ENCODE measurements at regions of chr20 and their contacts with region 1.

Region 1: GRCh38 chr20:35601008-35601973 is 14.3 kb upstream of the SPAG4 start:
- DNase-seq: peak; percentile 89
- H3K4me3 Mint-ChIP-seq: peak overlapping the region; percentile 67
- H3K27ac Mint-ChIP-seq: no peak overlapping the region
- H3K4me1 Mint-ChIP-seq: peaks cover 9% of the 10 kb centered on the region
- H3K27me3 Mint-ChIP-seq: peaks cover 18% of the 10 kb centered on the region

Region 2: GRCh38 chr20:35583636-35584560 is 17.4 kb before region 1 on chr20:
- CTCF ChIA-PET with region 1: no interaction called
- POLR2A ChIA-PET with region 1: no interaction called
- intact Hi-C with region 1: no loop called
- DNase-seq: no peak
- H3K4me3 Mint-ChIP-seq: no peak overlapping the region
- H3K27ac Mint-ChIP-seq: no peak overlapping the region
- H3K4me1 Mint-ChIP-seq: no peaks in the 10 kb centered on the region
- H3K27me3 Mint-ChIP-seq: no peaks in the 10 kb centered on the region

Region 3: DNA sequence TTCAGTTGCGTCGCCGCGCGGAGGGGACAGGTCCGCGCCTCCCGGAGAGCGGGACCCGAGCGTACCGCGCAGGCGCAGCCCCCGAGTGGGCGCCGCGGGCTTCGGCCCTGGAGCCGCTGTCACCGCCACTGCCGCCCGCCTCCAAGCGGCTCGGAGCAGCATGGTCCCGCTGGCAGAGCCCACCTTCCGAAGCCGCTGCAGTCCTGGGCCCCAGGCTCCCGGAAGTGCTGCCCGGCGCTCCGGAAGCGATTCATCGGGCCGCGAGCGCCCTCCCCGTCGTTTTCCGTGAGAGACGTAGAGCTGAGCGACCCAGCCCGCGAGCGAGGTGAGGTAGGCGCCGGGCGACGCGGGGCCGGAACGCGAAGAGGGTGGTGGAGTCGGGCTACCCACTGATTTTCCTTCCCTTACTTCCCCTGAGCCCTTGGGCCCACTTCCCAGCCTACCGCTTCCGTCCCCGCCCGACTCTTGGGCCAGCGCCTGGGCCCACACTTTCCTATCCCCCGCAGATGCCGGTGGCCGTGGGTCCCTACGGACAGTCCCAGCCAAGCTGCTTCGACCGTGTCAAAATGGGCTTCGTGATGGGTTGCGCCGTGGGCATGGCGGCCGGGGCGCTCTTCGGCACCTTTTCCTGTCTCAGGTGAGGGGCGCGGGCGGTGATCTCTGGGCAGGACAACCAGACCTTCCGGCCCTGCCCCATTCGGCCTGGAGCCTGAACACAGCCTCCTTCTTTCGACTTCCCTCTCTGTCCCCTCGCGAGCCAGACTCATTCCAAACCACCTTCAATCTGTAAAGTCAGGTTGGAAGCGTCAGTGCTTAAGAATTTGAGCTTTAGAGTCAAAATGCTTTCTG is 98.1 kb after region 1 on chr20 and contains the starts of genes NFS1 and ROMO1:
- CTCF ChIA-PET with region 1: interaction called, 8 read pairs
- POLR2A ChIA-PET with region 1: interaction called, 3 read pairs
- intact Hi-C with region 1: loop called (anchors 1 kb)
- DNase-seq: peak; percentile 91
- H3K4me3 Mint-ChIP-seq: peak within 1 kb of the TSS; percentile 88
- H3K27ac Mint-ChIP-seq: peak within 1 kb of the TSS; percentile 91
- H3K4me1 Mint-ChIP-seq: peaks cover 50% of the 10 kb centered on the region
- H3K27me3 Mint-ChIP-seq: no peaks in the 10 kb centered on the region
- total RNA-seq, gene NFS1: 36.9 to 40.8 TPM
- total RNA-seq, gene ROMO1: 141 to 142 TPM

Region 4: GRCh38 chr20:35883778-35884540 is 282.7 kb after region 1 on chr20:
- CTCF ChIA-PET with region 1: interaction called, 6 read pairs
- POLR2A ChIA-PET with region 1: no interaction called
- intact Hi-C with region 1: loop called (anchors 5 kb)
- DNase-seq: peak; percentile 75
- H3K4me3 Mint-ChIP-seq: no peak overlapping the region
- H3K27ac Mint-ChIP-seq: no peak overlapping the region
- H3K4me1 Mint-ChIP-seq: peaks cover 8% of the 10 kb centered on the region
- H3K27me3 Mint-ChIP-seq: no peaks in the 10 kb centered on the region

Measured in activated CD4-positive, alpha-beta memory T cell treated with anti-CD3 and anti-CD28 coated beads for 36 hours (primary cell).